PC-3 (cell line): ENCODE measurements at regions of chr10 and their contacts with region 1.

Region 1: DNA sequence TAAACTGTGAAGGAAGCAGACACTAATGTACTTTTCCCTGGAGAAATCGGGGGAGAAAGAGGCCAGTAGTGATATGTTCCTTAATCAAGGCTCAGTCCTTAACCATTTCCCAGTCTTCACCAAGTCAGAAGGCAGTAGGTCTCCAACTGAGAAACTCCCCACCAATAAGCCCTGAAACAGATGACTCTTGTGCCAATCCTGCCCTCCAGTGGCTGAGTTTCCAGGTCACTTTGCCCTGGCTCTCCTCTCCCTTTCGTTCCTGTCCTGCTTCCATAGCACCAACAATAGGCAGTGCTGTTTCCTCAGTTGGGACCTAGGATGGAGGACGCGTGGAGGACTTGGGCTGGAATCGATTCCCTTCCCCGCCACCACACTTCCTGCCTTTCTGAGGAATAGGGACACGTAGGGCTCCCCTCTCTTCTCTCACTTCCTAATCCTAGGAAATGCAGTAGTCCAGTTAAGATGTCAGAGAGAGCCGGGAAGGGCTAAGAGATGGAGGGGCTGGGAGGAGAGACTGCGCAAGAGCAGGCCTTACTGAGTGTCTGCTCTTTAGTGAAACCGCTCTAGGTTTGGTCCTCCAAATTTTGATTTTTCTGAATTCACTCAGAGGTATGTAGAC is 23.4 kb downstream of the ATOH7 start:
- DNase-seq: peak; percentile 96
- ATAC-seq: peak; percentile 95
- H3K4me3 ChIP-seq: no peak overlapping the region
- H3K27ac ChIP-seq: no peak overlapping the region
- H3K4me1 ChIP-seq: no peaks in the 10 kb centered on the region
- H3K27me3 ChIP-seq: no peaks in the 10 kb centered on the region
- CTCF ChIP-seq: peak; percentile 99

Region 2: GRCh38 chr10:67779465-67780203 is 428.9 kb before region 1 on chr10:
- CTCF ChIA-PET with region 1: no interaction called
- POLR2A ChIA-PET with region 1: no interaction called
- intact Hi-C with region 1: loop called (anchors 5 kb)
- DNase-seq: peak; percentile 95
- ATAC-seq: peak; percentile 78
- H3K4me3 ChIP-seq: no peak overlapping the region
- H3K27ac ChIP-seq: no peak overlapping the region
- H3K4me1 ChIP-seq: peaks cover 11% of the 10 kb centered on the region
- H3K27me3 ChIP-seq: no peaks in the 10 kb centered on the region
- CTCF ChIP-seq: peak; percentile 95

Region 3: DNA sequence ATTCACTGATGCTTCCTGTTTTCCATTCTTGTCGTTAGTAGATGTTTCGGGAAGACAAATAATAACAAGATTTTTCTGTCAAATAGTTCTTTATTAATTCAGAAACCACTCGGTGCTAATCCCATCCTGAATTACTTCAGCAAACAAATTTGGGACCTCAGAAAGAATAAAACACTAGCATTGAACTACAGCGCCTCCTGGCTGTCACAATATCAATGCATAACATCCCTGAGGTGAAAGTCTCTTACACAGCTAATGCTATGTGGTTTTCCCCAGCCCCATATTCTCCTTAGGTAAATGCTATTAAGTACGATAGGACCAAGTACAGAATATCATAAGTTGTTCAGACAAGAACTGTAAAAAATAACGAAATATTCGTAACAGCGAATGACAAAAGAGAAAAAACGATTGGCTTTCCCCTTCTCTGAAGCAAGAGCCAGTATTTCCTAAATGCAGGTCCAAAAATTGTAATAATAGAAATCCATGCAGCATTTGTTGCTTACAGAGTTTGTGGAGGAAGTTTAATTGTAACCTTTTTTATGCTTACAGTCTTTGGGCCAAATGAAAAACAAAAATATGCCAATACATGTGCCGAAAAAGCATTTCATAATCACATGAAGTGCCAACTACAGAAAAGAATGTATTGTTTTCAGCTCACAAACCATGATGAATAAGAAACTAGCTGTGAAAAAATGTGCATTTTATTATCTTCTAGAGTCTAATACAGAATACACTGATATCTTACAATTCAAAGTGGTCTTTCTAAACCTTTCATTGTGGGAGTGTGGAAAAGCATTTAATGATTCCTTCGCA is 52.0 kb before region 1 on chr10:
- CTCF ChIA-PET with region 1: interaction called, 4 read pairs
- POLR2A ChIA-PET with region 1: no interaction called
- intact Hi-C with region 1: loop called (anchors 1 kb)
- DNase-seq: peak; percentile 97
- ATAC-seq: peak; percentile 46
- H3K4me3 ChIP-seq: no peak overlapping the region
- H3K27ac ChIP-seq: peak overlapping the region; percentile 85
- H3K4me1 ChIP-seq: peaks cover 30% of the 10 kb centered on the region
- H3K27me3 ChIP-seq: no peaks in the 10 kb centered on the region
- CTCF ChIP-seq: peak; percentile 100

Region 4: GRCh38 chr10:68301790-68302502 is 93.4 kb after region 1 on chr10:
- CTCF ChIA-PET with region 1: interaction called, 130 read pairs
- POLR2A ChIA-PET with region 1: no interaction called
- intact Hi-C with region 1: loop called (anchors 1 kb)
- DNase-seq: peak; percentile 94
- ATAC-seq: peak; percentile 91
- H3K4me3 ChIP-seq: no peak overlapping the region
- H3K27ac ChIP-seq: no peak overlapping the region
- H3K4me1 ChIP-seq: peaks cover 8% of the 10 kb centered on the region; the same call in 1 of the 2 replicates
- H3K27me3 ChIP-seq: no peaks in the 10 kb centered on the region
- CTCF ChIP-seq: peak; percentile 97

Region 5: DNA sequence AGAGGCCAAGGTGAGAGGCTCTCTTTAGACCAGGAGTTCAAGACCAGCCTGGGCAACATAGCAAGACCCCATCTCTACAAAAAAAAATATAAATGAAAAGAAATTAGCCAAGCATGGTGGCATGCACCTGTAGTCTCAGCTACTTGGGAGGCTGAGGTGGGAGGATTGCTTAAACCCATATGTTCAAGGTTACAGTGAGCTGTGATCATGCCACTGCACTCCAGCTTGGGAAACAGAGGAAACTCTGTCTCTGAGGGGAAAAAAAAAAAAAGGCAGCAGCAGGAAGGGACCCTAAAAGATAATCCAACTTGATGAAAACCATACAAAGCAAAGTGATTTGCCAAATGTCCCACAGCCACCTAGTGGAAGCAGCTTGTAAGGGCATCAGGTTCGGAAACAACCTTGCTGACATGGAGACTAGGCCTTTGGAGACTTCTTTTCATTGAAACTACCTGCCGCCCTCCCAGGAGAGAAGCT is 139.8 kb after region 1 on chr10:
- CTCF ChIA-PET with region 1: interaction called, 26 read pairs
- POLR2A ChIA-PET with region 1: no interaction called
- intact Hi-C with region 1: no loop called
- DNase-seq: peak; percentile 83
- ATAC-seq: peak; percentile 73
- H3K4me3 ChIP-seq: no peak overlapping the region
- H3K27ac ChIP-seq: no peak overlapping the region
- H3K4me1 ChIP-seq: no peaks in the 10 kb centered on the region
- H3K27me3 ChIP-seq: no peaks in the 10 kb centered on the region
- CTCF ChIP-seq: peak; percentile 95

Region 6: DNA sequence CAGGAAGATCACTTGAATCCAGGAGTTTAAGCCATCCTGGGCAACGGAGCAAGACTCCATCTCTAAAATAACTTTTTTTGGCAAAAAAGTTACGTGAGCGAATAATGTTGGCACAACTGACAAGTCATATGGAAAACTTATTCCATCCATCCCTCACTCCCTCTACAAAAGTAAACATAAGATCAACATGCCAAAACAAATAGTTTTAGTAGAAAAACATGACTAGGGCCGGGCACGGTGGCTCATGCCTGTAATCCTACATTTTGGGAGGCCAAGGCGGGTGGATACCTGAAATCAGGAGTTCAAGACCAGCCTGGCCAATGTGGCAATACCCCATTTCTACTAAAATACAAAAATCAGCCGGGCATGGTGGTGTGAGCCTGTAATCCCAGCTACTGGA is 293.2 kb after region 1 on chr10:
- CTCF ChIA-PET with region 1: no interaction called
- POLR2A ChIA-PET with region 1: no interaction called
- intact Hi-C with region 1: no loop called
- DNase-seq: peak; percentile 50
- ATAC-seq: peak; percentile 84
- H3K4me3 ChIP-seq: no peak overlapping the region
- H3K27ac ChIP-seq: no peak overlapping the region
- H3K4me1 ChIP-seq: no peaks in the 10 kb centered on the region
- H3K27me3 ChIP-seq: no peaks in the 10 kb centered on the region
- CTCF ChIP-seq: no peak